ENCODE measurements at regions of chr16 and their contacts with region 1.

Region 1: DNA sequence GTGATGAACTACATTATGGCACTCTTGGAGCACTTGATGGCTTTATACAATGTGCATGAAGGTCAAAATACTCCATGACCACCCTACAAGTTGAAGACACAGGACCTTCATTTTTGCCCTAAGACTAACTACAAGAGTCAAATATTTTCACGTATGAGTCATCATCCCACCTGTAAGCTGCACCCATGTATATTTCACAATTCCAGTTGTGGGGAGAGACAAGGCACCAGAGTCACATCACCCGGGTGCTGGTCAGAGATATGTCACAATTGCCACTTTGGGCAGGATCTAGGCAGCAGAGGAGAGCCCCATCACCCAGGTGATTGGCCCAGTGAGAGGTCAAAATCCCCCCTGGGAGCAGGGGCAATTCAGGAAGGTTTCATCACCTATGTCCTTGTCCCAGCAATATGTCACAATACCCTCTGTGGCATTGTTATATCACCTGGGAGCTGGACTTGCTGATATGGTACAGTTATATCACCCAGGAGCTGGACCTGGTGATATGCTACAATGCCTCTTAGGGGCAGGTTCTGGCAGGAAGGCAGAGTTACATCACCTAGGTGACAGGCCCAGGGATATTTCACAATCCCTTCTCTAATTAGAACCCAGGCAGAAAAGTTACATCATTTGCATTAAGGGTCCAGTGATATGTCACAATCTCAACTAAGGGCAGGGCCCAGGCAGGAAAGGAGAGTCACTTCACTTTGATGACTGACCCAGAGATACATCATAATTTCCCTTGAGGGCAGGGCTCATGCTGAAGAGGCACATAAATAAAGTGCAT is 1839.2 kb downstream of the TP53TG3F start:
- DNase-seq: no peak
- ATAC-seq: no peak
- H3K4me3 ChIP-seq: no peak overlapping the region
- H3K27ac ChIP-seq: no peak overlapping the region
- H3K4me1 ChIP-seq: no peaks in the 10 kb centered on the region
- H3K27me3 ChIP-seq: no peaks in the 10 kb centered on the region
- CTCF ChIP-seq: no peak
- EP300 ChIP-seq: no peak
- POLR2A ChIP-seq: no peak
- RAD21 ChIP-seq: no peak

Region 2: GRCh38 chr16:35252356-35252941 is 46.2 kb before region 1 on chr16:
- CTCF ChIA-PET with region 1: no interaction called
- POLR2A ChIA-PET with region 1: no interaction called
- in situ Hi-C with region 1: no loop called
- intact Hi-C with region 1: loop called (anchors 2 kb)
- DNase-seq: no peak
- ATAC-seq: no peak
- H3K4me3 ChIP-seq: no peak overlapping the region
- H3K27ac ChIP-seq: no peak overlapping the region
- H3K4me1 ChIP-seq: no peaks in the 10 kb centered on the region
- H3K27me3 ChIP-seq: no peaks in the 10 kb centered on the region
- CTCF ChIP-seq: no peak
- EP300 ChIP-seq: no peak
- POLR2A ChIP-seq: no peak
- RAD21 ChIP-seq: no peak

Region 3: GRCh38 chr16:35319536-35320192 is 21.0 kb after region 1 on chr16:
- CTCF ChIA-PET with region 1: no interaction called
- POLR2A ChIA-PET with region 1: no interaction called
- in situ Hi-C with region 1: no loop called
- intact Hi-C with region 1: no loop called
- DNase-seq: no peak
- ATAC-seq: no peak
- H3K4me3 ChIP-seq: no peak overlapping the region
- H3K27ac ChIP-seq: no peak overlapping the region
- H3K4me1 ChIP-seq: no peaks in the 10 kb centered on the region
- H3K27me3 ChIP-seq: no peaks in the 10 kb centered on the region
- CTCF ChIP-seq: no peak
- EP300 ChIP-seq: no peak
- POLR2A ChIP-seq: no peak
- RAD21 ChIP-seq: no peak